Left ventricle myocardium superior (tissue), 1 donor: ENCODE measurements at regions of chr19 and their contacts with region 1.

Region 1: GRCh38 chr19:10388957-10389356 is 8.6 kb upstream of the TYK2 start:
- DNase-seq: peak; percentile 93
- ATAC-seq: peak; percentile 74

Region 2: GRCh38 chr19:10269333-10270179 is 119.4 kb before region 1 on chr19:
- intact Hi-C with region 1: loop called (anchors 5 kb)
- DNase-seq: peak; percentile 93
- ATAC-seq: peak; percentile 85